Testis (tissue), 5 donors: ENCODE measurements at regions of chr12 and their contacts with region 1.

Region 1: DNA sequence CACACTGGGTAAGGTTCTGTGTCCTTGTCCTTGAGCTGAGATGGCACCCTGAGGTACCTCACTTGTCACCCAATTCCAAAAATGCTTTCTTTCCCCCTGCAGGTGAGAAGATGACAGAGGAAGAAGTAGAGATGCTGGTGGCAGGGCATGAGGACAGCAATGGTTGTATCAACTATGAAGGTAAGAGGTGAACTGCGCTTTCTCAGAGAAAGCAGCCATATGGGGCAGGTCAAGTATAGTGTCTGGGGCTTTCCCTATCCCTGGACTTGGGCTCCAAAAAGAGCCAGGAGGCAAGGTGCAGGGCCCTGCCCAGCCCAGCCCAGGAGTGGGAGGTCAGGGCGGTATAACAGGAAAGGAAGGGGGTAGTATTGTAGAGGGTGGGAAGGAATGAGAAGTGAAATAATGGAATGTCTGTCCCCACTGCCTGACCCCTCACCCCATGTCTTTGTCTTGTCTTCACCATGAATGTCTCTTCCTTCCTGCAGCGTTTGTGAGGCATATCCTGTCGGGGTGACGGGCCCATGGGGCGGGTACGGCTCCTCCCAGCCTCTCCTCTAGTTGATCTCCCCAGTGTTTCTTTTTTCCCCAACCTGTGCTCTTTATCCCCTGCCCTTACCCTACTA is 2.1 kb downstream of the MYL6 start:
- DNase-seq: no peak
- H3K4me3 ChIP-seq: peak overlapping the region; percentile 76 to 85
- H3K27ac ChIP-seq: peak overlapping the region; percentile 98 to 99
- H3K4me1 ChIP-seq: peaks cover 33% of the 10 kb centered on the region
- H3K27me3 ChIP-seq: no peaks in the 10 kb centered on the region
- CTCF ChIP-seq: no peak
- POLR2A ChIP-seq: no peak

Region 2: DNA sequence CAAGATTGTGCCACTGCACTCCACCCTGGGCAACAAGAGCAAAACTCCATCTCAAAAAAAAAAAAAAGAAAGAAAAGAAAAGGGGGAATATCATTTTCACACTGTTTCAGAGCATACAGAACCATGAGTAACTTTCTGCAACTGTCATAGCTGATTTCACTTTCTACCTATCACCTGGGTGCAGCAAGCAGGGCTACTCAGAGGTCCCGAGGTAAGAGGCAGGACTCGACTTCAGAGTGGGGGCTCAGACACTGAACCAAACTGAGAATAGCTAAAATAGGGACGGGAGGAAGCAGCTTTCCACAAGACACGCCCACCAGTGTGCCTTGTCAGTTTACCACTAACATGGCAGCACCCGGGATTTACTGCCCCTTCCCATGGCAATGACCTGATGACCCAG is 493.7 kb before region 1 on chr12:
- intact Hi-C with region 1: no loop called
- DNase-seq: peak; percentile 11
- H3K4me3 ChIP-seq: no peak overlapping the region
- H3K27ac ChIP-seq: no peak overlapping the region
- H3K4me1 ChIP-seq: no peaks in the 10 kb centered on the region
- H3K27me3 ChIP-seq: no peaks in the 10 kb centered on the region
- CTCF ChIP-seq: no peak
- POLR2A ChIP-seq: no peak

Region 3: GRCh38 chr12:56062996-56063395 is 97.3 kb before region 1 on chr12:
- intact Hi-C with region 1: no loop called
- DNase-seq: no peak
- H3K4me3 ChIP-seq: no peak overlapping the region
- H3K27ac ChIP-seq: no peak overlapping the region
- H3K4me1 ChIP-seq: no peaks in the 10 kb centered on the region
- H3K27me3 ChIP-seq: no peaks in the 10 kb centered on the region
- CTCF ChIP-seq: no peak
- POLR2A ChIP-seq: no peak

Region 4: DNA sequence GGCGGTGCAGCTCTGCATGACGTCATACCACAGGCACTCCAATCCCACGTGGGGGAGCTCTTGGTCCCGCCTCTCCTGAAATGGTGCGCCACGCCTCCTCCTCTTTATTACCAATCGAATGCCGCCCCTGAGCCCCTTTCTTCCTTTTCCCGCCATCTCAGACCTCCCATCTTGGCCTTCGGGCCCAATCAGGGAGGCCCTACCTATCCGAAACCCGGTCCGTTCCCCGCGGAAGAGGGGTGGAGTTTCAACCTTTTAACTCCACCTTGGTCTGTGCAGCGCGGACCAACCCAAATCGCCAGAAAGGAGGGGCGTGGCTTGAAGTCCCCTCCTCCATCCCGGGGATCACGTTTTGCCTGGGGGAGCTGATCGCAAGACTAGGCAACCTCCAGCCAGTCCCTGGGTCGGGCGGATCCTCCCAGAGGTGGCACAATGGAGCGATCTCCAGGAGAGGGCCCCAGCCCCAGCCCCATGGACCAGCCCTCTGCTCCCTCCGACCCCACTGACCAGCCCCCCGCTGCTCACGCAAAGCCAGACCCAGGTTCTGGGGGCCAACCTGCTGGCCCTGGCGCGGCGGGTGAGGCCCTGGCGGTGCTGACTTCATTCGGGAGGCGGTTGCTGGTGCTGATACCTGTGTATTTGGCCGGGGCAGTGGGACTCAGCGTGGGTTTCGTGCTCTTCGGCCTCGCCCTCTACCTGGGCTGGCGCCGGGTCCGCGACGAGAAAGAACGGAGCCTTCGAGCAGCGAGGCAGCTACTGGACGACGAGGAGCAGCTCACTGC is 32.2 kb before region 1 on chr12 and contains the start of gene ESYT1:
- intact Hi-C with region 1: loop called (anchors 5 kb)
- DNase-seq: peak; percentile 99
- H3K4me3 ChIP-seq: peak within 1 kb of the TSS; percentile 77
- H3K27ac ChIP-seq: peak within 1 kb of the TSS; percentile 80 to 93
- H3K4me1 ChIP-seq: peaks cover 26% of the 10 kb centered on the region
- H3K27me3 ChIP-seq: no peaks in the 10 kb centered on the region
- CTCF ChIP-seq: no peak
- POLR2A ChIP-seq: peak; percentile 96
- total RNA-seq, gene ESYT1: 72.0 to 99.8 TPM